Caco-2 (cell line): ENCODE measurements at regions of chrX and their contacts with region 1.

Region 1: GRCh38 chrX:133838761-133839676 is 146.4 kb downstream of the GPC3 start:
- DNase-seq: peak; percentile 48 to 63
- H3K4me3 ChIP-seq: no peak overlapping the region
- H3K4me3 Mint-ChIP-seq: no peak overlapping the region
- H3K27ac Mint-ChIP-seq: no peak overlapping the region
- H3K4me1 ChIP-seq: no peaks in the 10 kb centered on the region
- H3K4me1 Mint-ChIP-seq: no peaks in the 10 kb centered on the region
- H3K27me3 ChIP-seq: no peaks in the 10 kb centered on the region
- H3K27me3 Mint-ChIP-seq: no peaks in the 10 kb centered on the region
- CTCF ChIP-seq: peak; percentile 41 to 50

Region 2: GRCh38 chrX:133792198-133792953 is 46.6 kb before region 1 on chrX:
- CTCF ChIA-PET with region 1: interaction called, 4 read pairs
- POLR2A ChIA-PET with region 1: no interaction called
- intact Hi-C with region 1: loop called (anchors 1 kb)
- DNase-seq: peak; percentile 54 to 68
- H3K4me3 ChIP-seq: no peak overlapping the region
- H3K4me3 Mint-ChIP-seq: no peak overlapping the region
- H3K27ac Mint-ChIP-seq: no peak overlapping the region
- H3K4me1 ChIP-seq: no peaks in the 10 kb centered on the region
- H3K4me1 Mint-ChIP-seq: peaks cover 6% of the 10 kb centered on the region
- H3K27me3 ChIP-seq: no peaks in the 10 kb centered on the region
- H3K27me3 Mint-ChIP-seq: no peaks in the 10 kb centered on the region
- CTCF ChIP-seq: peak; percentile 96 to 98

Region 3: GRCh38 chrX:133813971-133814370 is 25.0 kb before region 1 on chrX:
- CTCF ChIA-PET with region 1: interaction called, 10 read pairs
- POLR2A ChIA-PET with region 1: no interaction called
- intact Hi-C with region 1: no loop called
- DNase-seq: no peak
- H3K4me3 ChIP-seq: no peak overlapping the region
- H3K4me3 Mint-ChIP-seq: no peak overlapping the region
- H3K27ac Mint-ChIP-seq: no peak overlapping the region
- H3K4me1 ChIP-seq: no peaks in the 10 kb centered on the region
- H3K4me1 Mint-ChIP-seq: no peaks in the 10 kb centered on the region
- H3K27me3 ChIP-seq: no peaks in the 10 kb centered on the region
- H3K27me3 Mint-ChIP-seq: no peaks in the 10 kb centered on the region
- CTCF ChIP-seq: no peak